ENCODE measurements at regions of chr2 and their contacts with region 1.

Region 1: GRCh38 chr2:182666674-182667314 is 49.3 kb upstream of the DNAJC10 start:
- DNase-seq: peak in 5 of 35 experiments; percentile 2 to 61 (median 10)
- ATAC-seq: peak; percentile 50 to 61 (median 58)
- H3K4me3 ChIP-seq: no peak overlapping the region
- H3K4me3 Mint-ChIP-seq: no peak overlapping the region
- H3K27ac ChIP-seq: no peak overlapping the region
- H3K27ac Mint-ChIP-seq: no peak overlapping the region
- H3K4me1 ChIP-seq: no peaks in the 10 kb centered on the region
- H3K4me1 Mint-ChIP-seq: no peaks in the 10 kb centered on the region
- H3K27me3 ChIP-seq: peaks cover 0 to 2% of the 10 kb centered on the region in 2 experiments
- H3K27me3 Mint-ChIP-seq: no peaks in the 10 kb centered on the region

Region 2: DNA sequence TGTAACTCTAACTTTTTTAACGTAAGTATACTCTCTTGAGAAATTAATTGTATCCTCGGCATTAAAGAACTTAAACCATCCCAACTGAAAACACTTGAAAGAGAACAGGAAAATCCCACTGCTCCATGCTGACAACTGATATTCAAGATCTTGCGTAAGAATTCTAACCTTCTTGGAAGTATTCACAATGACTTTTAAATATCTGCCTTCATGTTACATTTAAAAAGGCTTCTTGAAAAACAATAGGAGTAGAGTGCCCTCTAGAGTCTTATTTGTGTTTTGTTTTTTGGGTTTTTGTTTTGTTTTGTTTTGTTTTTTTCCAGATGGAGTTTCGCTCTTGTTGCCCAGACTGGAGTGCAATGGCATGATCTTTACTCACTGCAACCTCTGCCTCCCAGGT is 16.1 kb before region 1 on chr2:
- CTCF ChIA-PET with region 1: interaction called, 3 to 10 read pairs
- POLR2A ChIA-PET with region 1: interaction called in 1 of 2 experiments, 3 read pairs
- DNase-seq: peak in 1 of 35 experiments; percentile 9
- ATAC-seq: no peak
- H3K4me3 ChIP-seq: no peak overlapping the region
- H3K4me3 Mint-ChIP-seq: no peak overlapping the region
- H3K27ac ChIP-seq: no peak overlapping the region
- H3K27ac Mint-ChIP-seq: no peak overlapping the region
- H3K4me1 ChIP-seq: no peaks in the 10 kb centered on the region
- H3K4me1 Mint-ChIP-seq: peaks cover 6 to 12% (median 11%) of the 10 kb centered on the region in 3 donors
- H3K27me3 ChIP-seq: no peaks in the 10 kb centered on the region
- H3K27me3 Mint-ChIP-seq: peaks cover 5 to 7% of the 10 kb centered on the region in 2 donors

Region 3: GRCh38 chr2:182694189-182694588 is 27.4 kb after region 1 on chr2:
- CTCF ChIA-PET with region 1: no interaction called
- POLR2A ChIA-PET with region 1: no interaction called
- DNase-seq: no peak
- ATAC-seq: no peak
- H3K4me3 ChIP-seq: no peak overlapping the region
- H3K4me3 Mint-ChIP-seq: no peak overlapping the region
- H3K27ac ChIP-seq: no peak overlapping the region
- H3K27ac Mint-ChIP-seq: no peak overlapping the region
- H3K4me1 ChIP-seq: no peaks in the 10 kb centered on the region
- H3K4me1 Mint-ChIP-seq: no peaks in the 10 kb centered on the region
- H3K27me3 ChIP-seq: no peaks in the 10 kb centered on the region
- H3K27me3 Mint-ChIP-seq: peaks cover 5 to 8% of the 10 kb centered on the region in 2 donors

Measured in T-cell (primary cell).